Colonic mucosa (tissue), 4 donors: ENCODE measurements at regions of chr5 and their contacts with region 1.

Region 1: GRCh38 chr5:133111299-133111698 is 59.5 kb downstream of the HSPA4 start:
- DNase-seq: peak; percentile 85
- H3K4me3 ChIP-seq: no peak overlapping the region
- H3K27ac ChIP-seq: no peak overlapping the region
- H3K4me1 ChIP-seq: no peaks in the 10 kb centered on the region
- H3K27me3 ChIP-seq: no peaks in the 10 kb centered on the region
- CTCF ChIP-seq: peak; percentile 89

Region 2: DNA sequence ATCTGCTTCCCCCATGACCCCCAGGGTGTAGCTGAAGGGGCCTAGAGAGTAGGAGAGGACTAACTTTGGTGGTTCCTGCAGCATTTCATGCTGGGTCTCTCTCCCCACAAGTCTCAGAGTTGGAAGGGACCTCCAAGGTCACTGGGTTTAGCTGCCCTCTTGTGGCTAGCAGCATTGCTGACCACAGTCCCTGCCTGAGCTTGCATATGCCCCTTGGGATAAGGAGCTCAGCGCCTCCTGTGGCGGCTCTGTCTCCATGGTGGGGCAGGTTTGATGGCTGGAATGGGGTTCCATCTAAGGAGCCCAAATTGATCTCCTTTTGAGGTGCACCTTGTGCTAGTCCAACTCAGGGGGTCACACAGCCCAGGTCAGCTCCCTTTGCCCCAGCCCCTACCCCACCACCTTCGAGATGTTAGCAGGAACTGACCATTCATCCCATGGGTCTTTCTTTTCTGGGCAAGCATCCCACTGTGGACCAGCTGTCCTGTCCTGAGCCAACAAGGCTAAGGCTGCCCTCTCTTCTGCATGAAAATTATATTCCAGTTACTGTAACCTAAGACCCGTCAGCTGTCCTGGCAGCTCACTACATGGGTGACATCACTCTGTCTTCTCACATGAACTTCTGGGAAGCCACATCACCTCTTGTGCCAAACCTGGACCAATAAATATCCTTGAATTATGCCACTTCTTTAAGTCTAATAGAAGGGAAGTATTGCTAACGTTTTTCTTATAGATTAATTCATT is 136.8 kb after region 1 on chr5:
- intact Hi-C with region 1: loop called (anchors 5 kb)
- DNase-seq: peak; percentile 32
- H3K4me3 ChIP-seq: no peak overlapping the region
- H3K27ac ChIP-seq: no peak overlapping the region
- H3K4me1 ChIP-seq: no peaks in the 10 kb centered on the region
- H3K27me3 ChIP-seq: no peaks in the 10 kb centered on the region
- CTCF ChIP-seq: peak; percentile 22

Region 3: DNA sequence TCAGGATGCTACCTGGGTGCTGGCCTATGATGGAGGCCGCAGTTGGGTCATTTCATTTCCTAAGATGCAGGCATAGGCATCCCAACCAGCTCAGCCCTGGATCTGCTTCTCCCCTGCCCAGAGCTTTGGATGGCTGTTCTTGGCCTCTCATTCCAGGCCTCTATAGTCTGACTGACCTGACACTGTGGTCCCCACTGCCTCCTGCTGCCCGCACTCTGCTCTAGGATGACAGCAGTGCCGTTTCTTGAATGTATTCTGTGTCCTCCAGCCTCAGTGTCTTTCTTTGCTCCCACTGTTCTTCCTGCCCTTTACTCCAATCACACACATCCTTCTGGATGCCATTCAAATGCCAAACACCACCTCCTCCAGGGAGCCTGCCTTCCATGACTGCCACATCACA is 176.2 kb after region 1 on chr5:
- intact Hi-C with region 1: loop called (anchors 1 kb)
- DNase-seq: peak; percentile 25
- H3K4me3 ChIP-seq: no peak overlapping the region
- H3K27ac ChIP-seq: no peak overlapping the region
- H3K4me1 ChIP-seq: no peaks in the 10 kb centered on the region
- H3K27me3 ChIP-seq: no peaks in the 10 kb centered on the region
- CTCF ChIP-seq: peak; percentile 38

Region 4: DNA sequence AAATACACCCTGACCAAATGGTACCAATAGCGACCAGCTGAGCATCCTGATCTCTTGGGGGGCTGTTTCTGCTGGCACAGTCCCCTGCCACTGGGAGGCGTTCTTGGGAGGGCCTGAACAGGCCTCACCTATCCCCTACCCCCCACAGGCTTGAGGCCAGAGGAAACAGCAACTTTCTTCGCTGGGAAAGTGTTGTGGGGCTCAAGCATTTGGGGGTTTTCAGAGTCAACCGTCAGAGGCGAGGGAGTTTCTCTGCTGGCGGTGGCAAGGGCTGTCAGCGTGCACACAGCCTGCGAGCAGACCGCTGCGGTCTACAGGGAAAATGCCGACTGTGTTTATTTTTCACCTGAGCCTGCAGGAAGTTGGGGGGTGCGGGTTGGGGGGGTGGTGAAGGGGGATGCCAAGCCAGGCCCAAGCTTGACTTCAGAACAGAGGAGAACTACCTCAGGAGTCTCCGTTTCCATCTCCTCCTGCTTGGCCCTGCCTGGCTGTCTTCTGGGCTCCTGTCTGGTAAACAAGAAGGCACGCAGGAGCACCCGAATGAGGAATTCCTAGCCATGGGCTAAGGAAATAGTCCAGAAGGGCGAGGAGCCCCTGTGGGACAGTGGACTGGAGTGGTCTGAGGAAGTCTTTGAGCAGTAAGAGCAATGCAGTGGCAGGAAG is 1021.2 kb after region 1 on chr5:
- intact Hi-C with region 1: no loop called
- DNase-seq: no peak
- H3K4me3 ChIP-seq: no peak overlapping the region
- H3K27ac ChIP-seq: no peak overlapping the region
- H3K4me1 ChIP-seq: no peaks in the 10 kb centered on the region
- H3K27me3 ChIP-seq: no peaks in the 10 kb centered on the region
- CTCF ChIP-seq: no peak